Right ventricle myocardium inferior (tissue), 1 donor: ENCODE measurements at regions of chr4 and their contacts with region 1.

Region 1: GRCh38 chr4:41882625-41883347 is 52.4 kb upstream of the TMEM33 start:
- DNase-seq: peak; percentile 85
- ATAC-seq: peak; percentile 73

Region 2: DNA sequence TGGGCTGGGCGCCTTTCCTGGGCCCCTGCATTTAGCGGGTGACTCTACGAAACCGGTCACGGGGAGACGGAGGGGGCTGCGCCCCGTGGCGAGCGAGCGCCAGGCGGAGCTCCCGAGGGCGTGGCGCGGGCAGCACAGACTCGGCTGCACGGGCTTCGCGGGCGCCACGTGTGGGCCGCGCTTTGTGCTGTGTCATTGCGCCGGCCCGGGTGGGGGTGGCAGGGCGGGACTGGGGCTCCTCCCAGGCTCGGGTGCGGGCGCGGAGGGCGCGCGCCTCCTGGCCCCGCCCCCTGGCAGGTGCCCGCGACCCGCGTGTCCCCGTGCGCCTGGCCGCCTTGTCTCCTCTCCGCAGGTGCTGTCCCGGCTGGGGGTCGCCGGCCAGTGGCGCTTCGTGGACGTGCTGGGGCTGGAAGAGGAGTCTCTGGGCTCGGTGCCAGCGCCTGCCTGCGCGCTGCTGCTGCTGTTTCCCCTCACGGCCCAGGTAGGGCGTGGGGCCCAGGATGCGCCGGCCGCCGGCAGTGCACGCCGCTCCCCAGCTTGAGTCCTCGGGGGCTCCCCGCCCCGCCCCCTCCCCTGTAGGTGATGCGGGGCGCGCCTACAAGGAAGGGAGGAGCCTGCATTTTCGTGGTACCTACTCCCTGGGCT is 625.4 kb before region 1 on chr4:
- intact Hi-C with region 1: loop called (anchors 5 kb)
- DNase-seq: no peak
- ATAC-seq: peak; percentile 78

Region 3: DNA sequence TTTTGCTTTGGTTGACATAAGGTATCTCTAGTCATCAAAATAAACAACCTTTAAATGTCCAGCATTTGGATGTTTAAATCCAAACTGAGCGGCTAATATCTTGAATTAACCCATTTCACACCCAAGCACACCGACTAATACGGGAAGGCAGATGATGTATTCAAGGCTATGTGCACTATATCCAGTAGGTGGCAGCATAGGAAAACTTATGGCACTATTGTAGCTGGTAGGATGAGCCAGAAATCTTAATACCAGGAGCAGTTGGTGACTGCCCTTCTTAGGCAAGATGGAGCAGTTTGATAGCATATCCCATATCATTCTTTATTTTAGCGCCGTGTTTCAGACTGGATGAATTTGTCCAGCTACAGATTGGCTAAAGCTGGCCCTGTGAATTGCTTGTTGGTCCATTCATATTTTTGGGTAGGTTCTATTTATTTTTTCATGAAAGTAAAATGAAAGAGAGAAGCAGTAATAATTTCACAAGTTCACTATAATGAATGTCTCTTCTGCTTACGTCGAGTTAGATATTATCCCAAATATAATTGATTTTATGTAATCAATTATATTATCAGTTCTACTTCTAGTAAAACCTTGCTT is 601.6 kb before region 1 on chr4:
- intact Hi-C with region 1: loop called (anchors 5 kb)
- DNase-seq: no peak
- ATAC-seq: peak; percentile 93

Region 4: DNA sequence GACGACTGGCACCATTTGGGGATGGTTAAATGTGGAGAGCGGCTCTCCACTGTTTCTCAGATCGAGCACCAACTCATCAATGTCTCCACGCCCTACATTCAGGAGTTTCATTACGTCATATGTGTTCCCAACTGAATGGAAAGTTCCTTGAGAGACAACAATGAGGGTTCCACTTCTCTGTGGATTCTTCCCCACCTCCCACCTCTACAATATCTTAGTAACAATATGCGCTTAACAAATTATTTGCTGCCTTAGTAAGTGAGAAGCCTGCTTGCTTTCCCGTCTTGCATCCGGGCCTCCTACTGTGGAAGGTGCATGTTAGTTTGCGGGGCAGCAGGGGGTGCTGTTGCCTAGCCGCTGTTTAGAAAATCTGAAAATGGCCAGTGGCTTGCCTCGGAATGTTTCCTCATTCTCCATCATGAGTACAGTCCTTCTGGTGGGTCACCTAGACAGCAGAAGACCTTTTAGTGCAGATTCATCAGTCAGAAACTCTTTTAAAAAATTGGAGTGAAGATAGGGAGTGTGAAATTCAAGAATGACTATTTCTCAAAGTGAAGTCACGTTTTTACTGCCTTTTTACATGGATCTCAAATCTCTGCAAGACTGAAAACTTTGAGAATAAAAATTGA is 190.0 kb before region 1 on chr4:
- intact Hi-C with region 1: loop called (anchors 2 kb)
- DNase-seq: no peak
- ATAC-seq: peak; percentile 57